ENCODE measurements at regions of chr4 and their contacts with region 1.

Region 1: GRCh38 chr4:145898926-145899531 is 39.6 kb downstream of the ZNF827 start:
- DNase-seq: no peak
- ATAC-seq: peak; percentile 41
- H3K4me3 Mint-ChIP-seq: 0 out of 2 replicates have a peak overlapping the region, but pooled peaks have one; percentile 10
- H3K27ac Mint-ChIP-seq: peak overlapping the region; percentile 86
- H3K4me1 Mint-ChIP-seq: peaks cover 70% of the 10 kb centered on the region
- H3K27me3 Mint-ChIP-seq: no peaks in the 10 kb centered on the region
- CTCF ChIP-seq: no peak

Region 2: DNA sequence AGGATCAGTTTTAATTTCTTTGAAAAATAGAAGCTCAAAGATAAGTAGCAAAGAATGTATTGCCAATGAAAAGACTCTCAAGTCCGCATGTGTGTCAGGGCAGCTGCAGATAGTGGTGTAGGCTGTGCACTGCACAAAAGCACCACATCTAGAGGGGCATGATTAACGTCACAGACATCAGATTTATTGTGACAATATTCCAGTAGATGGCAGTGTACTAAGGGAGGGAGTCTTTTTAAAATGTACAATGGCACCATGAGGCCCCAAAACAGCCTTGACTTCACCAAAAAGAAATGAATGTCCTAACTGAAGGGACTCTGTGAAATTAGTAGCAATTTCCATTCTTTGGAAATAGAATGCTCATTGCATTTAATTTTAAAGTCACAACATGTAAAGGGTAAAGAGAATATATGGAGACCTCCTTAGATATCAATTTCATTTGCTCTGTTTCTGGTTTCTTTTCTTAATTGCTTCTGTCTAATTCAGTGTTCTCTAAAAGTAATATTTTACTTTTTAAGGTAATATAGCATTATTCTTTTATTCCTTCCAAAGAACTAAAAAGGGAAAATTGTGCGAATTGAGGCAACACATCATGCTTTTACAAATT is 58.8 kb before region 1 on chr4:
- CTCF ChIA-PET with region 1: no interaction called
- POLR2A ChIA-PET with region 1: no interaction called
- DNase-seq: no peak
- ATAC-seq: peak; percentile 21
- H3K4me3 Mint-ChIP-seq: no peak overlapping the region
- H3K27ac Mint-ChIP-seq: peak overlapping the region; percentile 95
- H3K4me1 Mint-ChIP-seq: peaks cover 79% of the 10 kb centered on the region
- H3K27me3 Mint-ChIP-seq: no peaks in the 10 kb centered on the region
- CTCF ChIP-seq: no peak

Region 3: DNA sequence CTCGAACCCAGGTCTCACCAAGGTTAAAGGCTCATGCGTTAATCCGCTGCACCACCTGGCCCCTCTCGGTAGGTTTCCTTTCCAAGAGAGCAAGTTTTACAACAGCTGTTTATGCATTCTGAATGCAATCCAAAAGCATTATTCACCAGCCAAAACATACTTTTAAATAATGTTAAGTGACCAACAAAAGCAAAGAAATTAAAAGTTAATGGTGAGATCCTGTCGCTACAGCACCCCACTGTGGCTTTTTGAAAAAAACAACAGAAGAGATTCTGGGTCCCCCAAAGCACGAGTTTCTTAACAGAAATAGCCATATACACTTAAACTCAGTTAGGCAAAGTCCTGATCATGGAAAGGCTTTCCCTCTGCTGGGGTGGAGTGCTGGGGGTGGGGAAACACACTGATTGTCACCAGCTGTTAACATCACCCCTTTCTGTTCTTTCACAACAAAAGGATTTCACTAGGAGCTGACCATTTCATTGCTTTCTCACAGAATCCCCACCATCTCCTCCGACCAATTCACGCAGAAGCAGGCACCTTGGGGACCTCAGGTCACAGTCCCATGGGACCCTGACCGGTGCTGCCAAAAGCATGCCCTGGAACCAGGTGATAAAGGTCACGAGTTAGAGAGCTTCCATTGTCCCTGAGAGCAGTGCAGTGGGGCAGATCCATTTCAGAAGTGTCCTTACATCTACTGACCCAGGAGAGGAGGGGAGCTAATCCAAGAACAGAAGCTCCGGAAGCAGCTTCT is 11.6 kb before region 1 on chr4:
- CTCF ChIA-PET with region 1: interaction called, 13 read pairs
- POLR2A ChIA-PET with region 1: no interaction called
- DNase-seq: no peak
- ATAC-seq: peak; percentile 55
- H3K4me3 Mint-ChIP-seq: peak overlapping the region; percentile 4; the same call in 1 of the 2 replicates
- H3K27ac Mint-ChIP-seq: peak overlapping the region; percentile 91
- H3K4me1 Mint-ChIP-seq: peaks cover 85% of the 10 kb centered on the region
- H3K27me3 Mint-ChIP-seq: no peaks in the 10 kb centered on the region
- CTCF ChIP-seq: no peak